ENCODE measurements at regions of chr2 and their contacts with region 1.

Region 1: GRCh38 chr2:33033606-33034081 is 86.9 kb downstream of the LTBP1 start:
- DNase-seq: no peak
- ATAC-seq: peak; percentile 66 to 85 (median 73)
- H3K4me3 ChIP-seq: peak overlapping the region in 5 of 10 donors; percentile 21 to 41 (median 24)
- H3K27ac ChIP-seq: no peak overlapping the region
- H3K4me1 ChIP-seq: peaks cover 0 to 34% (median 5%) of the 10 kb centered on the region in 9 donors
- H3K27me3 ChIP-seq: no peaks in the 10 kb centered on the region
- CTCF ChIP-seq: peak; percentile 46 to 81 (median 64)

Region 2: GRCh38 chr2:32553829-32554432 is 479.7 kb before region 1 on chr2:
- intact Hi-C with region 1: loop called in 7 of 10 experiments (anchors 5 to 10 kb)
- DNase-seq: no peak
- ATAC-seq: peak in 6 of 8 donors; percentile 58 to 75 (median 70)
- H3K4me3 ChIP-seq: no peak overlapping the region
- H3K27ac ChIP-seq: no peak overlapping the region
- H3K4me1 ChIP-seq: peaks cover 0 to 12% (median 2%) of the 10 kb centered on the region in 9 donors
- H3K27me3 ChIP-seq: no peaks in the 10 kb centered on the region
- CTCF ChIP-seq: peak; percentile 40 to 83 (median 76)

Region 3: DNA sequence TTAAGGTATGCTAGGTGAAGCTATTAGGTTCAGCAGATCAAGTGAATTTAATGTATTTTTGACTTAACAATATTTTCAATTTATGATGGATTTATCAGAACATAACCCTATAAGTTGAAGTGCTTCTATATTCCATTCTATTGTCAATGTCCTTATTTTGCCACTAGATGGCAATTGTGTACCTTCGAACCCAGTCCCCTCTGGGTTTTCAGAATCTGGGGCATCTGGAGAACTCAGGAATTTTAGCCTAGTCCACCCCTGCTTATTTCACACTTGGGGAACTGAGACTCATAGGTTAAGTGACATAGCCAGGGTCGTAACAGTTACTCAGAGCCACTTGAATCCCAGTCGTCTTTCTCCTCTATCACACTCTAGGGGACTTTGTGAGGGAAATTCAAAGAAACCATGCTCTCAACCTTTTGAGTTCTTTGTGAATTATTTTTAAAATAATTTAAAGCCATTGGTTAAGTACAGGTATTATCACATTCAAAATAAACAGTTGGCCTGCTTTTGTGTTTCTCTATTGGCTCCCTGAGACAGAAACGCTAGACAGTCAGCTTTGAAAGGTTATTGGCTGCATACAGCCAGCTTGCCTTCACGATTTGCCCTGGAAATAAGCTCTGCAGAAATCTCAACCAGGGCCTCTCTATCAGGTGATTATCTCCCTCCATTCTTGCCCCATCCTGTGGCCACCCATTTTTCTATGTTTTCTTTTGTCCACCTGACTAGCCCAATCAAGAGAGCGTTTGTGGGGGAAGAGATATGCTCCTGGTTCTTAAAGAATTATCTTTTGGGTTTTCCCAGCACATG is 260.8 kb before region 1 on chr2:
- intact Hi-C with region 1: loop called (anchors 1 to 5 kb)
- DNase-seq: peak in 1 of 2 donors; percentile 31
- ATAC-seq: peak; percentile 52 to 81 (median 78)
- H3K4me3 ChIP-seq: no peak overlapping the region
- H3K27ac ChIP-seq: peak overlapping the region in 5 of 10 donors; percentile 34 to 62 (median 51)
- H3K4me1 ChIP-seq: peaks cover 0 to 42% (median 10%) of the 10 kb centered on the region in 9 donors
- H3K27me3 ChIP-seq: no peaks in the 10 kb centered on the region
- CTCF ChIP-seq: peak; percentile 52 to 86 (median 77)

Region 4: DNA sequence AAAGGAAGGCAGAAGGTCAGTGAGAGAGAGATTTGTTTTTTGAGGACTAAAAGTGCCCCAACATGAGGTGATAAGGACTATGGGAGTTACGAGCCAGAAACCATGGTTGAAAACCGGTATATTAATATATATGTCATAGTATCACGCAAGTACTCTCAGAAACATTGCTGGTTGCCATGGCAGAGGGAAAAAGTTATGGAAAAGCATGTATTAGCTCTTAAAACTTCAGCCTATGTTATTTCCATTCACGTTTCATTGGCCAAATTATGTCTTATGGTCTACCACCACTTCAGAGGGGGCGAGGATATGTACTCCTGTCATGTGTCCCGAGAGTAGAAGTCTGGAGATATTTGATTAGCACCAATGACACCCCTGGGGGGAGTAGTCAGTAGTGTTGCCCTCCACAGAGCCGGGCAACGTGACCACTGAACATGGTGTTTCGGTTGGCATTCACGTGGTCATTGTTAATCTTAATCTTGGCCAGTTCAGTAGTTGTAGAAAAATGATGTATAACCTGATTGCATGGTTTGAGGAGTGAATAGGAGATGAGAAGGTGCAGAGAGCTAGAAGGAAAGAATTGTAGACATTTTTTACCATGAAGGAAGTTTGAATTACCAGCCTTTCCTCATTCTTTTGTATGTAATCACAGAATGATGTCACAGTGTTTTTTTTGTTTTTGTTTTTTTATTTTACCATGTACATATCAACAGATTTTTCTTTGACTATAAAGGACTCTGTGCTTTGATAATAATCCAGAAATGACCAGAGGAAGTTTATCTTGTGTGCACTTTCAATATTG is 39.2 kb after region 1 on chr2:
- intact Hi-C with region 1: no loop called
- DNase-seq: no peak
- ATAC-seq: no peak
- H3K4me3 ChIP-seq: no peak overlapping the region
- H3K27ac ChIP-seq: no peak overlapping the region
- H3K4me1 ChIP-seq: peaks cover 0 to 45% (median 23%) of the 10 kb centered on the region in 9 donors
- H3K27me3 ChIP-seq: no peaks in the 10 kb centered on the region
- CTCF ChIP-seq: no peak

Region 5: GRCh38 chr2:33086400-33087015 is 52.9 kb after region 1 on chr2:
- intact Hi-C with region 1: no loop called
- DNase-seq: peak in 1 of 2 donors; percentile 66
- ATAC-seq: peak; percentile 41 to 63 (median 54)
- H3K4me3 ChIP-seq: no peak overlapping the region
- H3K27ac ChIP-seq: peak overlapping the region in 6 of 10 donors; percentile 2 to 59 (median 30)
- H3K4me1 ChIP-seq: peaks cover 5 to 60% (median 34%) of the 10 kb centered on the region in 9 donors
- H3K27me3 ChIP-seq: no peaks in the 10 kb centered on the region
- CTCF ChIP-seq: peak in 6 of 9 donors; percentile 23 to 55 (median 38)

Region 6: GRCh38 chr2:33267756-33268155 is 234.1 kb after region 1 on chr2:
- intact Hi-C with region 1: loop called in 7 of 10 experiments (anchors 5 to 10 kb)
- DNase-seq: no peak
- ATAC-seq: no peak
- H3K4me3 ChIP-seq: no peak overlapping the region
- H3K27ac ChIP-seq: peak overlapping the region in 1 of 10 donors; percentile 4
- H3K4me1 ChIP-seq: peaks cover 0 to 19% (median 11%) of the 10 kb centered on the region in 9 donors
- H3K27me3 ChIP-seq: no peaks in the 10 kb centered on the region
- CTCF ChIP-seq: no peak

Region 7: GRCh38 chr2:33372940-33373553 is 339.4 kb after region 1 on chr2:
- intact Hi-C with region 1: loop called in 6 of 10 experiments (anchors 5 to 10 kb)
- DNase-seq: peak in 1 of 2 donors; percentile 16
- ATAC-seq: no peak
- H3K4me3 ChIP-seq: no peak overlapping the region
- H3K27ac ChIP-seq: no peak overlapping the region
- H3K4me1 ChIP-seq: peaks cover 0 to 17% (median 0%) of the 10 kb centered on the region in 9 donors
- H3K27me3 ChIP-seq: no peaks in the 10 kb centered on the region
- CTCF ChIP-seq: peak; percentile 50 to 83 (median 80)

Region 8: DNA sequence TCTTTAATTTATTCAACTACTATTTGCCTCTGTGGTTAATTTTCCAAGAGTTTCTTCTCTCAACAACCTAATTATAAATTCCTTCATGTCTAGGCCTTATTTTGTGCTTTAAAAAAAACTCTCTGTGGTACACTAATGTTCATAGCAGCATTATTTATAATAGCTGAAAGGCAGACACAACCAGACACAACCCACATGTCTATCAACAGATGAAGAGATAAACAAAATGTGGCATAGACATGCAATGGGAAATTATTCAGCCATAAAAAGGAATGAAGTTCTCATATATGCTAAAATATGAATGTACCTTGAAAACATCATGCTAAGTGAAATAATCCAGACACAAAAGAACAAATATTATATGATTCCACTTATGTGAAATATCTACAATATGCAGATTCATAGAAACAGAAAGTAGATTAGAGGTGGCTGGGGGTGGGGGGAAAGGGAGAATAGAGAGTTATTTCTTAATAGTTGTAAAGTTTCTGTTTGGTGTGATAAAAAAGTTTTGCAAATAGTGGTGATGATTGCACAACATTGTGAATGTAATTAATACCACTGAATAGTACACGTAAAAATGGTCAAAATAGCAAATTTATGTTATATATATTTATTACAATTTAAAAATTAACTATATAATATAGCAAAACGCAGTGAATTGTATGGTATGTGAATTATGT is 414.7 kb after region 1 on chr2:
- intact Hi-C with region 1: loop called in 3 of 10 experiments (anchors 5 to 10 kb)
- DNase-seq: no peak
- ATAC-seq: no peak
- H3K4me3 ChIP-seq: no peak overlapping the region
- H3K27ac ChIP-seq: no peak overlapping the region
- H3K4me1 ChIP-seq: peaks cover 0 to 26% (median 16%) of the 10 kb centered on the region in 9 donors
- H3K27me3 ChIP-seq: no peaks in the 10 kb centered on the region
- CTCF ChIP-seq: no peak

Measured in heart right ventricle (tissue), 16 donors.